Activated B cell treated with CpG ODN at 0.5 μM for 24 hours (primary cell): ENCODE measurements at regions of chr15 and their contacts with region 1.

Region 1: DNA sequence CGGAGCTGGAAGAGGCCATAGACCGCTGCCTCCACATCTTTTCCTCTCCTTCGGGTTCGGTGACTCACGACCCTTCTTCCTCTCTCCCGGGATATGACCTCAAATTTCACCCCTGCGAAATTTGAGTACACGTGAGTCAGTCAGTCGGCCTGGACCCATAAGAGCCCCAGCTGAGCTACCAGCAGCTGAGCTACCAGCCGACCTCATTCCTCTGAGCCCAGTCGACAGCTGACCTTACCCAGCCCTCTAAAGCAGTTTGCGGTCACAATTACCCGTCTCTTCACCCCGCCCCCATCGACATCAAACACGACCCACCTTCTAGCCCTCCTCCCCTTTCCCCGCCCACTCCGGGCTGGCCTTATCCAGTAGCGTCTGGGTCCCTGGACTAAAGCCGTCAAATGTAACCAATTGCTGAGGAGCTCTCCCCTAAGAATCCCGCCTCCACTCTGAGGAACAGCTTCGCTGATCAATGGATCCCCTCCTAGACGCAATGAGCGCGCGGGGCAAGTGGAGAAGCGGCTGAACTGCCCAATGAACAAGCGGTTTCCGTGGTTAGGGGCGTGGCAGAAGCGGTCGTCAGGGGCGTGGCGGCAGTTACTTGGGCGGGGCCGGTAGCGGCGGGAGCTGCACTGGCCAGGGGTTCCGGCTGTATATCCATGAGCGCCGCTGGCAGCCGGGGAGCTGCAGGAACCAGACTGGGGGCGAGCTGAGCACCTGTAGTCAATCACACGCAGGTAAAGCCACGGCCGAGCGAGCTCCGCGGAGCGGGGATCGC is at the start of gene ABHD2:
- DNase-seq: peak; percentile 98
- ATAC-seq: peak; percentile 97
- H3K4me3 Mint-ChIP-seq: no peak within 1 kb of the TSS
- H3K27ac Mint-ChIP-seq: no peak within 1 kb of the TSS
- H3K4me1 Mint-ChIP-seq: peaks cover 33% of the 10 kb centered on the region
- H3K27me3 Mint-ChIP-seq: no peaks in the 10 kb centered on the region
- CTCF ChIP-seq: no peak
- total RNA-seq, gene ABHD2: 40.7 and 48.8 TPM in 2 replicates

Region 2: DNA sequence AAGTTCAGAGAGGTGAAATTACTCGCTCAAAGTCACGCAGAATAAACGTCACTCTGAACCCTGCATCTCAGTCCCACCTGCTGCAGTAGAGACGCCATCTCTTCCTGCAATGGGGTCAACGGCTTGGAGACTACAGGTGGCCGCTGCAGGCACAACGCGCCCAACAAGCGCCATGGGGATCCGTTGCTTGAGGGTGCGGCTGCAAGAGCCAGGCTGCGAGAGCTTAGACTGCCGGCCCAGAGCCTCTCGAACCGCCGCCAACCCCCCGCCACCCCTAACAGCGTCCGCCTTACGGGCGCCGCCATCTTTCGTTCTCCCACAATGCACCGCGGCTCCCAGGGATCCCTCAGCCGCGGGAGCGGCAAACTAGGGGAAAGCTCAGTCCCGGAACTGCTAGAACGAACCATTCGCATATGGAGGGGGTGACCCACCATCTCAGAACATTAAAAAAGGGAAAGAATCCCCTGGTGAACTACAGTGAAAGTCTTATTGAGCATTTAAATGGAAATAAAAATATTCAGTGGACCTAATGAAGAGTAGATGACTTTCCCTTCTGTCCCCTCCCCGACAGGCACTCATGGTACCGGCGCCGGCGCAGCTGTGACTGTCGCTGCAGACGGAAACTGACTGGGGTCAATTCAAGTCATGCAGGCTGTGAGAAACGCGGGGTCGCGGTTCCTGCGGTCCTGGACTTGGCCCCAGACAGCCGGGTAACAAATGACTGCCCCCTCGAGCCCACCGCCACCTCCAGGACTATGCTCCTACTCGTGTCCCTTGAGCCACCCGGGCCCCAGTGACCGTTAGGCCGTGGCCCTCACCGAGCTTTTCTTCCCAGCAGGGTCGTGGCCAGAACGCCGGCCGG is 620.7 kb before region 1 on chr15 and contains the starts of genes MRPL46 and MRPS11:
- CTCF ChIA-PET with region 1: no interaction called
- POLR2A ChIA-PET with region 1: interaction called, 8 read pairs
- intact Hi-C with region 1: loop called (anchors 2 kb)
- DNase-seq: peak; percentile 82
- ATAC-seq: peak; percentile 91
- H3K4me3 Mint-ChIP-seq: peak within 1 kb of the TSS; percentile 96
- H3K27ac Mint-ChIP-seq: peak within 1 kb of the TSS; percentile 99
- H3K4me1 Mint-ChIP-seq: peaks cover 36% of the 10 kb centered on the region
- H3K27me3 Mint-ChIP-seq: no peaks in the 10 kb centered on the region
- CTCF ChIP-seq: no peak
- total RNA-seq, gene MRPL46: 29.6 and 31.2 TPM in 2 replicates
- total RNA-seq, gene MRPS11: 44.7 and 47.0 TPM in 2 replicates

Region 3: DNA sequence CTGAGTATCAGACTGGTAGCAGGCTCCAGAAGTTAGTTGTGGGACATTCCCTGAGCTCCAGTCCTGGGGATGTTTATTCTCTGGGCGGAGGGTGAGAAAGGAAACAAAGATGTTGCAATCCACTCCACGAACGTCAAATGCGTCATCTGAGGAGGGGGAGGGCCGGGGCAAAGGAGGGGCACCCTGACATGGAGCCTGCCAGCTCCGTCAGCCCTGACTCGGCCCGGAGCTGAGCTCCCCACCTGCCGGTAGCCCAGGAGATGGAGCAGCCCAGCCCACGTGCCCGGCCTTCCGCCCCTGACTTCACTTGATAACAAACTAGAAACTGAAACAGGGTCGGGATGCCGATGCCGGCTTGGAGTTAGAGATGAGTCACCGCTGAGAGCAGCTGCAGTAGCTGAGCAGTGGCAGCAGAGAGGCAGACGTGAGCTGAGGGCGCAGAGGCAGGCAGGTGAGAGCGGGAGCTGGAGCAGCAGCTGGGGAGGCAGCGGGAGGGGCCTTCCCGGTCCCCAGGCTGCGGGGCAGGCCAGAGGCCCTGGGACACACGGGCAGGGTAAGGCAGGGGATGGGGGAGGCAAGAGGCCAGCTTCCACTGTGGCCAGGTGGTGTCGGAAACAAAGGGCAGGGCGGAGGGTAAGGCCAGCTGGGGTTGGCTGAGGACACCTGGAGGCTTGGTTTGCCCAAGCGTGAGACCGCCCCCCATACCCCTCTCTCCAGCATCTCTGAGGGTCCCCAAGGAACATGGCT is 449.2 kb before region 1 on chr15 and contains the start of gene ISG20:
- CTCF ChIA-PET with region 1: no interaction called
- POLR2A ChIA-PET with region 1: interaction called, 8 read pairs
- intact Hi-C with region 1: loop called (anchors 1 kb)
- DNase-seq: peak; percentile 82
- ATAC-seq: peak; percentile 70
- H3K4me3 Mint-ChIP-seq: peak within 1 kb of the TSS; percentile 91
- H3K27ac Mint-ChIP-seq: peak within 1 kb of the TSS; percentile 97
- H3K4me1 Mint-ChIP-seq: peaks cover 90% of the 10 kb centered on the region
- H3K27me3 Mint-ChIP-seq: no peaks in the 10 kb centered on the region
- CTCF ChIP-seq: no peak
- total RNA-seq, gene ISG20: 84.6 and 87.1 TPM in 2 replicates

Region 4: DNA sequence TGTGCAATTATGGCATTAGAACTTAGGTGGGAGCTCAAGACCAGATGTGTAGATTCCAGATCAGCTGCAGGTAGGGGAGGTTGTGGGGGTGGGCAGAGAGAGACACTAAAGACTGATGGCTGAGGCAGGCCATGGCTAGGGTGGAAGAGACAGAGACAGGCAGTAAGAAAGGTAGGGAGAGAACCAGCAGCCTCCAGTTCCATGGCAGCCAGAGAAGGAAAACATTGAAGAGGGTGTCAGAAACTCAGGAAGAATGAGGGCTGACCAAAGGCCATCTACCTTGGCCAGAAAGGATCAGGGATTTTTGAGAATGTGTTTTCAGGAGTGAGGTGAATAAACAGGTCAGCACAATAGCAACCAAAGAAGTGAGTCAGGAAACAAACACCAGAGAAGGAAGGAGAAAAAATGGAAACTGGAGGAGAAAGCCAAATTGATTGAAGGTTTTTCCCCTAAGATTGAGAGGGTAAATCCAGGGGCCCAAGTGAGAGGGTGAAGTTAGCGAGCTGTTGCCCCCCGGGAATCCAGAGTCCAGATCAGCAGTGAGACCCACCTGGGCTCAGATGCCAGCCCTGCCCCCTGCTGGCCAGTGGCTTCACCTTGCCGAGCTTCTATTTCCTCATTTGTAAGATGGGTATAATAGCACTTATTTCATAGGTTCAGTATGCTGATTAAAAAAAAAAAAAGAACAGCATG is 41.3 kb after region 1 on chr15:
- CTCF ChIA-PET with region 1: interaction called, 16 read pairs
- POLR2A ChIA-PET with region 1: no interaction called
- intact Hi-C with region 1: loop called (anchors 2 kb)
- DNase-seq: peak; percentile 45
- ATAC-seq: peak; percentile 64
- H3K4me3 Mint-ChIP-seq: no peak overlapping the region
- H3K27ac Mint-ChIP-seq: no peak overlapping the region
- H3K4me1 Mint-ChIP-seq: peaks cover 14% of the 10 kb centered on the region
- H3K27me3 Mint-ChIP-seq: no peaks in the 10 kb centered on the region
- CTCF ChIP-seq: peak; percentile 60

Region 5: DNA sequence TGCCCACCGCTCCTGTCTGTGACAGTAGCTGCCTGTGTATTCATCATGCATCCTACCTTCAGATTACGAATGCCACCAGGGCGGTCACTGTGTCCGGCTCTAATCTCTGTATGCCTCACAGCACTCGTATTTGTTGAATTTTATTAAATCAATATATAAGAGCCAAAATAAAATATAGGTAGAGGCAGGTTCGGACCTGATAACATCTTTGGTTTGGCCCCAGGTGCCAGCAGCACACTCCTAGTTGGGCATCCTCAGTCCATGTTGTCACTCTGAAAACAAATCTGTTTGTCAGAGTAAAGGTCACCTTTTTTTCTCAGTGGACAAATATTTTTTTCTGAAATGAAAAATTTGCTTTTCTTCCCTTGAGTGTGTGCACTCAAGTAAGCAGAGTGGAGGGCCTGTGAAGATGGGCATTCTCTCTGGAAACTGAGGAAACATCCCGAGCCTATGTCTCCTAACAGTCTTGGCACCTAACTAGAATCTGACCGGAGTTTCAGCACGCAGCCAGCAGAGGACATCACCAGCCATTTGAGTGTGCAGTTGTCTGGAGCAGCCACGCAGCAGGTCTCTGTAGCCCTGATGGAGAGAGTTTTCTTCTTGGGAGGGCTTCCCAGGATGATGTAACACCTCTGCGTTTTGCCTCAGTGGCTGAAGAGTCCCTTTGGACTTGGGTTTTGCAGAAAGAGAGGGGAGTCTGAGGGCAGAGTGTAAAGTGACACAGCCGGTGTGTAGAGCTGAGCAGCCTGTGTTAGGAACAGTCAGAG is 51.6 kb after region 1 on chr15:
- CTCF ChIA-PET with region 1: no interaction called
- POLR2A ChIA-PET with region 1: no interaction called
- intact Hi-C with region 1: no loop called
- DNase-seq: no peak
- ATAC-seq: no peak
- H3K4me3 Mint-ChIP-seq: no peak overlapping the region
- H3K27ac Mint-ChIP-seq: no peak overlapping the region
- H3K4me1 Mint-ChIP-seq: peaks cover 8% of the 10 kb centered on the region
- H3K27me3 Mint-ChIP-seq: no peaks in the 10 kb centered on the region
- CTCF ChIP-seq: no peak

Region 6: GRCh38 chr15:89334510-89335288 is 246.7 kb after region 1 on chr15 and contains the start of gene POLG:
- CTCF ChIA-PET with region 1: no interaction called
- POLR2A ChIA-PET with region 1: no interaction called
- intact Hi-C with region 1: loop called (anchors 2 kb)
- DNase-seq: peak; percentile 97
- ATAC-seq: peak; percentile 92
- H3K4me3 Mint-ChIP-seq: peak within 1 kb of the TSS; percentile 88
- H3K27ac Mint-ChIP-seq: peak within 1 kb of the TSS; percentile 99
- H3K4me1 Mint-ChIP-seq: peaks cover 44% of the 10 kb centered on the region
- H3K27me3 Mint-ChIP-seq: peaks cover 2% of the 10 kb centered on the region
- CTCF ChIP-seq: no peak
- total RNA-seq, gene POLG: 116 and 144 TPM in 2 replicates